ENCODE measurements at regions of chr3 and their contacts with region 1.

Region 1: GRCh38 chr3:10026084-10026890 is at the start of gene FANCD2:
- DNase-seq: peak; percentile 92
- ATAC-seq: peak; percentile 94
- H3K4me3 Mint-ChIP-seq: peak within 1 kb of the TSS; percentile 98
- H3K27ac Mint-ChIP-seq: peak within 1 kb of the TSS; percentile 97
- H3K4me1 Mint-ChIP-seq: peaks cover 6% of the 10 kb centered on the region
- H3K27me3 Mint-ChIP-seq: no peaks in the 10 kb centered on the region
- CTCF ChIP-seq: no peak
- total RNA-seq, gene FANCD2: 69.6 to 73.5 TPM (median 73.1 TPM) in 3 replicates

Region 2: DNA sequence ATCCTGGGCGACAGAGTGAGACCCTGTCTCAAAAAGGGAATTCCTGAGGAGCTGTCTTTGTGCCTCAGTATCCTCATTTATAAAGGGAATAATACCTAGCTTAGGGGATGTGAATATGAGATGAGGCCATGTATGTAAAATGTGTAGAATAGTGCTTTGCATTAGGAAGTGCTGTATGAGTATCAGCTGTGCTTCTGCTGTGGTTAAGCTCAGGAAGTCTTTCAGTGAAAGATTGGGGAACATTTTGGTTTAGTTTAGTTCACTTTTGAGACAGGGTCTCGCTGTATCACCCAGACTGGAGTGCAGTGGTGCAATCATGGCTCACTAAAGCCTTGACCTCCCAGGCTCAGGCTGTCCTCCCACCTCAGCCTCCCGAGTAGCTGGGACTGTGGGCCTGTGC is 652.8 kb before region 1 on chr3:
- CTCF ChIA-PET with region 1: no interaction called
- POLR2A ChIA-PET with region 1: no interaction called
- DNase-seq: no peak
- ATAC-seq: no peak
- H3K4me3 Mint-ChIP-seq: no peak overlapping the region
- H3K27ac Mint-ChIP-seq: no peak overlapping the region
- H3K4me1 Mint-ChIP-seq: no peaks in the 10 kb centered on the region
- H3K27me3 Mint-ChIP-seq: no peaks in the 10 kb centered on the region
- CTCF ChIP-seq: no peak

Region 3: DNA sequence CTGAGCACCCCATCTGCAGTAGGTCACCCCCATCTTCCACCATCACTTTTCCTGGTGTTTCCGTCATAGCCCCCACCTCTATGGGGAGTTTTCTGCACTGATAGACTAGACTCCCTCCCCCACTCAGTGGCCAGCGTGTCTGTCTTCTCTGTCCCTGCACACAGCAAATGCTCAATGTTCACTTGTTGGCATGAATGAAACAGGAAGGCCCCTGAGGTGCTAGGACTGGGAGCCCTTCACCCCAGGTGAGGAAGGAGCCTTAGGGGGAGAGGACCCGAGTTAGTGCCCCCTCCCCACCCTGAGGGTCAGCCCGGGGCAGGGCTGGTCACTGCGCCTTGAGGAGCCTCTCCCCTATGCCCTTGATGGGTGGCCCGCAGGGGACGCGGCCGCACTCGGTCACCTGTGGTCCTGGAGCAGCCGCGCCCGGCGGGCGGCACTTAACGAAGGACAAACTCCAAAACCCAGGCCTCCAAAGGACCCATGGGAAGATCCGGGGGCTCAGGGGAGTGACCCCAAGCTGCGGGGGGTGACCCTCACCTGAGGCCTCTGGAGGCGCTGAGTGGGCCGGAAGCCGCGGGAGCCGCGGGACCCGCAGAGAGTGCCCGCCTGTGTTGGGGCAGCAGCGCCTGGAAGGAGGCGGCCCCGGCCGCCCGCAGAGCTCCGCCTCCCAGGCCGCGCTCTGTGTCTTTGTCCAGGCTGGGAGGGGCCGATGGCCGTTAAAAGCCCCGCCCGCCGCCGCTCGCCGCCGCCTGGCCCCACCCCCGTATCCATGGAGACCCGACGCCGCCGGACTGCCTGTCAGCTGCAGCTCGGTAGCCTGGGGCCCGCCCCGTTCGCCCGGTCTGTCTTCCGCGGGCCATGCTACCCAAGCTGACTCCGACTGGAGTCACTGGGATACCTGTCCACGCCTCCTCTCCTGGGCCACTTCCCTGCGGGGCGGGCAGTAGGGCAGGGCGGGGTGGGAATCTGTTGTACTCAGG is 15.5 kb before region 1 on chr3:
- CTCF ChIA-PET with region 1: no interaction called
- POLR2A ChIA-PET with region 1: interaction called, 10 read pairs
- DNase-seq: peak; percentile 98
- ATAC-seq: peak; percentile 81
- H3K4me3 Mint-ChIP-seq: peak overlapping the region; percentile 64
- H3K27ac Mint-ChIP-seq: no peak overlapping the region
- H3K4me1 Mint-ChIP-seq: peaks cover 20% of the 10 kb centered on the region
- H3K27me3 Mint-ChIP-seq: peaks cover 34% of the 10 kb centered on the region
- CTCF ChIP-seq: no peak

Region 4: GRCh38 chr3:10055097-10055496 is 28.8 kb after region 1 on chr3:
- CTCF ChIA-PET with region 1: no interaction called
- POLR2A ChIA-PET with region 1: no interaction called
- DNase-seq: no peak
- ATAC-seq: no peak
- H3K4me3 Mint-ChIP-seq: no peak overlapping the region
- H3K27ac Mint-ChIP-seq: no peak overlapping the region
- H3K4me1 Mint-ChIP-seq: no peaks in the 10 kb centered on the region
- H3K27me3 Mint-ChIP-seq: no peaks in the 10 kb centered on the region
- CTCF ChIP-seq: no peak

Measured in WTC11 (cell line).